ENCODE measurements at regions of chr15 and their contacts with region 1.

Region 1: GRCh38 chr15:34587717-34588674 is 4.5 kb upstream of the GOLGA8B start:
- DNase-seq: no peak
- ATAC-seq: peak; percentile 53
- H3K4me3 Mint-ChIP-seq: peak overlapping the region; percentile 67
- H3K27ac Mint-ChIP-seq: peak overlapping the region; percentile 68
- H3K4me1 Mint-ChIP-seq: peaks cover 11% of the 10 kb centered on the region
- H3K27me3 Mint-ChIP-seq: peaks cover 2% of the 10 kb centered on the region
- CTCF ChIP-seq: peak; percentile 41

Region 2: DNA sequence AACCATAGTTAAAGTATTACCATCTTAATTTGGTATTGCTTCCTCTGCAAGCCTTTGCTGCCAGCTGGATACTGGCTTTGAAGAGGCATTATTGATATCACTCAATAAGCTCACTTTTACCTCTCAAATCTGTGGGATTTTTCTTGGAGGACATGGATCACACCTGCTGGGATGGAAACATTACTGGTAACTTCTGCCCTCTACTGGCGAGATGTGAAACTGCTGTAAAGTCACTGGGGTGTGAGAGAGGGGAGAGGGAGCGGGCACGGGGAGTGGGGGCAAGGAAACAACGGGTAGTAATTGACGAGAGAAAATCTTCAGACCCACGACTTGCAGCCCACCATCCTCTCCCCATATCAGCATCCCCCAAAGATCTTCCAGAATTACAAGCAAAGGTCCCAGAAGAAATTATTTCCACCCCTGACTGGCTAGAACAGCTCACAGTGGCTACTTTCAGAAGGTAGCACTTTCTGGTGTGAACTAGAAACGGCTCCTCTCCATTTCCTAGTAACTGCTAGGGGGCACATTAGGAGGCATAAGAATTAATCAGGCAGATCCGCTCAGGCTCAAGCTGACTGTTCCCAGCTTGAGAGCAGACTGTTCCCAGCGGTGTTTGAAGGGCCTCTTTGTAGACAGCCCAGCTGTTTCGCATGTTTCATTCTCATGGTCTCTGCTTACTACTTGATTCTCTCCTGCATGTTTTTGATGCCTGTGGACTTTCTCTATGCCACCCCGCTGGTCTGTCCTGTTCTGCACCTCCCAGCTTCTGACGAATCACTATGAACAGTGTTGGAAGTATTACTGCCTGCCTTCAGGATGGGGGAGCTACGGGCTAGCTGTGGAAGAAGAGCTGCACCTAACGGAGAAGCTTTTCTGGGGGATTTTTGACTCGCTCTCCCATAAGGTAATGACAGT is 850.1 kb before region 1 on chr15:
- CTCF ChIA-PET with region 1: no interaction called
- POLR2A ChIA-PET with region 1: no interaction called
- intact Hi-C with region 1: loop called (anchors 5 kb)
- DNase-seq: no peak
- ATAC-seq: no peak
- H3K4me3 Mint-ChIP-seq: no peak overlapping the region
- H3K27ac Mint-ChIP-seq: no peak overlapping the region
- H3K4me1 Mint-ChIP-seq: peaks cover 3% of the 10 kb centered on the region
- H3K27me3 Mint-ChIP-seq: no peaks in the 10 kb centered on the region
- CTCF ChIP-seq: no peak

Region 3: DNA sequence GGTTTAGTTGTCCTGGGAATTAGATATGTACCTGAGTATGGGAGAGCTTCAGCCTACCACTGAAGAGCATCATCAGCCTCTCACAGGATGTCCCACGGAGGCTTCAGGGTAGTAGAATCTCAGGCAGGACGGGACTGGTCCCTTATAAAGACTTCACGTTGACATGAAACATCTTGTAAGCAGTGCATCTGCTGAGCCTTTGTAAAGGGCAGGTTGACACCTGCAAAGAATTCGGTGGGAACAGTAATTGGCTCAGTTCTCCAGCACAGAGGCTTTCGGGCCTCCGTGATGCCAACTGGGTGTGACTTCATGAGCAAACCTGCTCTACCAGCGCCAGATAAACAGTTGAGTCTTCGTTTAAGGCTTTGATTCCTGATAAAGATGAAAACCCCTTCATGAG is 522.1 kb before region 1 on chr15:
- CTCF ChIA-PET with region 1: interaction called, 12 read pairs
- POLR2A ChIA-PET with region 1: no interaction called
- intact Hi-C with region 1: loop called (anchors 1 kb)
- DNase-seq: no peak
- ATAC-seq: no peak
- H3K4me3 Mint-ChIP-seq: no peak overlapping the region
- H3K27ac Mint-ChIP-seq: no peak overlapping the region
- H3K4me1 Mint-ChIP-seq: peaks cover 4% of the 10 kb centered on the region
- H3K27me3 Mint-ChIP-seq: no peaks in the 10 kb centered on the region
- CTCF ChIP-seq: no peak

Region 4: GRCh38 chr15:34109797-34110663 is 478.0 kb before region 1 on chr15:
- CTCF ChIA-PET with region 1: interaction called, 10 read pairs
- POLR2A ChIA-PET with region 1: no interaction called
- intact Hi-C with region 1: loop called (anchors 1 kb)
- DNase-seq: no peak
- ATAC-seq: no peak
- H3K4me3 Mint-ChIP-seq: no peak overlapping the region
- H3K27ac Mint-ChIP-seq: no peak overlapping the region
- H3K4me1 Mint-ChIP-seq: no peaks in the 10 kb centered on the region
- H3K27me3 Mint-ChIP-seq: no peaks in the 10 kb centered on the region
- CTCF ChIP-seq: peak; percentile 27

Region 5: DNA sequence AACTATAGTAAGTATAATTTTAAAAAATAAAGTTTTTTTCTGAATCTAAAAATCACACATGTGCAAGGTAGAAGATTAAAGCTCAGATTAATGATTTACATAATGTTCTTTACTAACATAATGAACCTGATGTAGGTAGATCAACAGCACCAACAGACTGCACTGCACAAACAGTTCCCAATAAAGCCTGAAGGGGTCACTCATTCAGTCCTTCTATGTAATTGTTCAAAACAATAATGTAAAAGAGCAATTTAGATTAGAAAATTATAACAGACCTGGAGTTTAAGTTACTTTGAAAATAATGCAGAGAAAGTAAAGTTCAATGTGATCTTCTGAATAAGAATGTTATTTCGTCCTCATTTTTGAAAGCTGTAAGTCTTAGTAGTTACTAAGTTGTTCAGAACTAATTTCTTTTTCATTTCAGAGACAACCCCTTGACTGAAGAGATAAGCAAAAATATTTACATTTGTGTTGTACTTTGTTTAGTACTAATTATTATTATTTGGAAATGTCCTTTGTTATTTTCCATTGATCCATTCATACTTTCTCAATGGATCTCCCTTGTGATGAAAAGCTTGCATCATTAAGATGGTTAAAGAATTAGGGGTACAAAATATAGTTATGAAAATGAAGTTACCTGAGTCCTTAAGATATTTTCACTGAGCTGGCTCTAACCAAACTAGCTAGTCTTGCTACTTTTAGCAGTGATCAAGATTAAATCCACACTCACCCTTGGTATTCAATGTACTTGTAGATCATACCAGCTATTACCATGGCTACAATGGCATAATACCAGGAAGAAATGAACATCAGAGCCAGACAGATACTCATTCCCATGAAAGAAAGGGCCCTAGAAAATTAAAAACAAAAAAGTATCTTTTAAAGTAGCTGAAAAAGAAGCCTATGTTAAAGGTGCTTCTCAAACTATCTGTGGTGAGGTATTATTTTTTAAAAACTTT is 346.3 kb before region 1 on chr15:
- CTCF ChIA-PET with region 1: interaction called, 23 read pairs
- POLR2A ChIA-PET with region 1: no interaction called
- intact Hi-C with region 1: loop called (anchors 1 kb)
- DNase-seq: no peak
- ATAC-seq: peak; percentile 94
- H3K4me3 Mint-ChIP-seq: no peak overlapping the region
- H3K27ac Mint-ChIP-seq: no peak overlapping the region
- H3K4me1 Mint-ChIP-seq: peaks cover 4% of the 10 kb centered on the region
- H3K27me3 Mint-ChIP-seq: no peaks in the 10 kb centered on the region
- CTCF ChIP-seq: peak; percentile 53

Region 6: GRCh38 chr15:34520566-34520965 is 67.4 kb before region 1 on chr15:
- CTCF ChIA-PET with region 1: no interaction called
- POLR2A ChIA-PET with region 1: no interaction called
- intact Hi-C with region 1: loop called (anchors 10 kb)
- DNase-seq: no peak
- ATAC-seq: no peak
- H3K4me3 Mint-ChIP-seq: no peak overlapping the region
- H3K27ac Mint-ChIP-seq: no peak overlapping the region
- H3K4me1 Mint-ChIP-seq: peaks cover under 1% of the 10 kb centered on the region
- H3K27me3 Mint-ChIP-seq: peaks cover 8% of the 10 kb centered on the region
- CTCF ChIP-seq: no peak

Region 7: GRCh38 chr15:35545824-35546510 is 958.0 kb after region 1 on chr15 and contains the start of gene DPH6:
- CTCF ChIA-PET with region 1: no interaction called
- POLR2A ChIA-PET with region 1: no interaction called
- intact Hi-C with region 1: loop called (anchors 5 kb)
- DNase-seq: peak; percentile 84
- ATAC-seq: peak; percentile 82
- H3K4me3 Mint-ChIP-seq: peak within 1 kb of the TSS; percentile 93
- H3K27ac Mint-ChIP-seq: peak within 1 kb of the TSS; percentile 92
- H3K4me1 Mint-ChIP-seq: peaks cover 30% of the 10 kb centered on the region
- H3K27me3 Mint-ChIP-seq: no peaks in the 10 kb centered on the region
- CTCF ChIP-seq: no peak
- total RNA-seq, gene DPH6: 18.8 and 20.8 TPM in 2 replicates

Measured in activated B cell treated with CpG ODN at 0.5 μM for 24 hours (primary cell).